MCF 10A (cell line): ENCODE measurements at regions of chr1 and their contacts with region 1.

Region 1: DNA sequence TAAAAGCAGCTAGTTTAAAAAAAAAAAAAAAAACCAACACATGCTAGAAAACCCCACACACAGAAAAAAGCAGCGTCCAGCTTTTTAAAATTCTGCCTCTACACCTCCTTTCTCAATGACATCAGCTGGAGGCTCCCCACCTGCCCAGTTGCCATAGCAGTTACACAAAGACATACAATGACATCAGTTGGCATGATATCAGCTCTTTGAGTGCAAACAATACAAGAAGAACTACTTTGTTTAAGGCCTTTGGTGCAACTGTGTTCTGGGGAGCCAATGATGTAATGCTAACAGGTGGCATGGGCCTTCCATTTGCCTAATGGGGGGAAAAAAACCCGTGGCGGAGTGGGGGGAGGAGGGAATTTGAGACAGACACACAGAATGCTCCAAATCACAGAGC is 32.9 kb downstream of the DUSP10 start:
- DNase-seq: peak; percentile 63
- H3K4me3 Mint-ChIP-seq: no peak overlapping the region
- H3K27ac Mint-ChIP-seq: peak overlapping the region; percentile 50
- H3K4me1 Mint-ChIP-seq: peaks cover 26% of the 10 kb centered on the region
- H3K27me3 Mint-ChIP-seq: no peaks in the 10 kb centered on the region
- CTCF ChIP-seq: no peak

Region 2: GRCh38 chr1:221689138-221689537 is 19.8 kb before region 1 on chr1:
- CTCF ChIA-PET with region 1: interaction called, 14 read pairs
- POLR2A ChIA-PET with region 1: interaction called, 7 read pairs
- intact Hi-C with region 1: no loop called
- DNase-seq: no peak
- H3K4me3 Mint-ChIP-seq: no peak overlapping the region
- H3K27ac Mint-ChIP-seq: no peak overlapping the region
- H3K4me1 Mint-ChIP-seq: no peaks in the 10 kb centered on the region
- H3K27me3 Mint-ChIP-seq: no peaks in the 10 kb centered on the region
- CTCF ChIP-seq: no peak

Region 3: DNA sequence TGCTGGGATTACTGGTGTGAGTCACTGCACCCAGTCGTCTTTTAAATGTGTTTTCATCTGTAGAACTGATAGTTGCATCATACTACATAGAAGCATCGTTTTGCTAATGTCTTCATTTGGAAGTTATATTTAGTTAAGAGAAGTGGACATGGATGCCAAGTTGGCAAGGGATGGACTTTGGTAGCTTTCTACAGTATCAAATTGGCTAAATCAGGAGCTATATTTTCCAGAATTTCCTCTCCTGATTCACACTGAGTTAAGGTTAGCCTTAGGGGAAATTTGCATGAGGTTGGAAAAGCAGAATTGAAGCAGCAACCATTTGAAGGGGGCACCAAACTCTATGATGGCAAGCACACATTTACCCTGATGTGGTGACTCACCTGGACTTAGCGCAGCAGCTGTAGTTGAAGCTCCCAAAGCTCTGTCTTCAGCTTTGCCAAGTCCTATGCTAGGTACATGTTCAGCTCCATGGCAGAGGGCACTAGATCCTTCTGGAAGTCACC is 11.0 kb before region 1 on chr1:
- CTCF ChIA-PET with region 1: interaction called, 5 read pairs
- POLR2A ChIA-PET with region 1: interaction called, 12 read pairs
- intact Hi-C with region 1: no loop called
- DNase-seq: peak; percentile 53
- H3K4me3 Mint-ChIP-seq: no peak overlapping the region
- H3K27ac Mint-ChIP-seq: no peak overlapping the region
- H3K4me1 Mint-ChIP-seq: peaks cover 7% of the 10 kb centered on the region
- H3K27me3 Mint-ChIP-seq: no peaks in the 10 kb centered on the region
- CTCF ChIP-seq: no peak

Region 4: GRCh38 chr1:221734187-221734586 is 25.2 kb after region 1 on chr1:
- CTCF ChIA-PET with region 1: no interaction called
- POLR2A ChIA-PET with region 1: no interaction called
- intact Hi-C with region 1: no loop called
- DNase-seq: no peak
- H3K4me3 Mint-ChIP-seq: no peak overlapping the region
- H3K27ac Mint-ChIP-seq: peak overlapping the region; percentile 6
- H3K4me1 Mint-ChIP-seq: peaks cover 46% of the 10 kb centered on the region
- H3K27me3 Mint-ChIP-seq: no peaks in the 10 kb centered on the region
- CTCF ChIP-seq: no peak